Breast epithelium (tissue), 4 donors: ENCODE measurements at regions of chr2 and their contacts with region 1.

Region 1: DNA sequence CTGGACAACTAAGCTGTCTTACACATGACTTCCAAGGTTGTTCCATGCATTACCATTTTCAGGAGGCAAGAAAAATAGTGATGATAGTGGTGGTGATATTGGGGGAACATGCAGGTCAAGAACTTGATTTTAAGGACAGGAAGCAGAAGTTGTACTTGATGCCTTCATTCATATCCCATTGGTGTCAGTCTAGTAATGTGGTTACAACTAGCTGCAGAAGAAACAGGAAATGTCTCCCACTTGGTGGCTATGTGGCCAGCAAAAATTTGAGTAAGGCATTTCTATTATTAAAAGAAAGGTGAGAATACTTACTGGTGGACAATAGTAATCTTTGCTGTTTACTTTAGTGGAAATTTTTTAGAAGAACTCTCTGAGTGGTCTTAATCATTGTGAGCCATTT is 103.4 kb downstream of the ALMS1 start:
- DNase-seq: no peak
- H3K4me3 ChIP-seq: no peak overlapping the region
- H3K27ac ChIP-seq: no peak overlapping the region
- H3K4me1 ChIP-seq: no peaks in the 10 kb centered on the region
- H3K27me3 ChIP-seq: no peaks in the 10 kb centered on the region
- CTCF ChIP-seq: no peak
- POLR2A ChIP-seq: no peak

Region 2: GRCh38 chr2:71646028-71646427 is 1843.0 kb before region 1 on chr2:
- intact Hi-C with region 1: no loop called
- DNase-seq: peak in 1 of 2 donors; percentile 84
- H3K4me3 ChIP-seq: no peak overlapping the region
- H3K27ac ChIP-seq: peak overlapping the region; percentile 44 to 69
- H3K4me1 ChIP-seq: no peaks in the 10 kb centered on the region
- H3K27me3 ChIP-seq: no peaks in the 10 kb centered on the region
- CTCF ChIP-seq: no peak
- POLR2A ChIP-seq: no peak

Region 3: DNA sequence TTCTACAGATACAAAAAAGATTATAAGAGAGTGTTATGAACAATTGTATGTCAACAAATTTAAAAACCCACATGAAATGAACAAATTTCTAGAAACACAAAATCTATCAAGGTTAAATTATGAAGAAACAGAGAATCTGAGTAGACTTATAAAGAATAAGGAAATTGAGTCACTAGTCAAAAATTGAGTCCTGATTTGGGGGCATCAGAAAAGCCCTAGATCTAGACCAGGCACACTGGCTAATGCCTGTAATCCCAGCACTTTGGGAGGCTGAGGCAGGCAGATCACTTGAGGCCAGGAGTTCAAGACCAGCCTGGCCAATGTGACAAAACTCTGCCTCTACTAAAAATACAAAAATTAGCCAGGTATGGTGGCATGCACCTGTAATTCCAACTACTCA is 617.2 kb before region 1 on chr2:
- intact Hi-C with region 1: loop called (anchors 5 kb)
- DNase-seq: no peak
- H3K4me3 ChIP-seq: no peak overlapping the region
- H3K27ac ChIP-seq: no peak overlapping the region
- H3K4me1 ChIP-seq: no peaks in the 10 kb centered on the region
- H3K27me3 ChIP-seq: no peaks in the 10 kb centered on the region
- CTCF ChIP-seq: no peak
- POLR2A ChIP-seq: no peak

Region 4: GRCh38 chr2:73350035-73350691 is 138.9 kb before region 1 on chr2:
- intact Hi-C with region 1: no loop called
- DNase-seq: no peak
- H3K4me3 ChIP-seq: no peak overlapping the region
- H3K27ac ChIP-seq: no peak overlapping the region
- H3K4me1 ChIP-seq: no peaks in the 10 kb centered on the region
- H3K27me3 ChIP-seq: peaks cover 0 to 7% of the 10 kb centered on the region in 2 donors
- CTCF ChIP-seq: no peak
- POLR2A ChIP-seq: no peak